B cell (primary cell): ENCODE measurements at regions of chr17 and their contacts with region 1.

Region 1: GRCh38 chr17:37358830-37359681 is 16.7 kb upstream of the C17orf78 start:
- DNase-seq: peak; percentile 95
- ATAC-seq: peak; percentile 95
- H3K4me3 ChIP-seq: peak overlapping the region; percentile 18 to 88 (median 83)
- H3K4me3 Mint-ChIP-seq: peak overlapping the region; percentile 92
- H3K27ac ChIP-seq: peak overlapping the region; percentile 60 to 63
- H3K27ac Mint-ChIP-seq: peak overlapping the region; percentile 80
- H3K4me1 ChIP-seq: peaks cover 12 to 18% of the 10 kb centered on the region in 2 donors
- H3K4me1 Mint-ChIP-seq: peaks cover 14% of the 10 kb centered on the region
- H3K27me3 ChIP-seq: no peaks in the 10 kb centered on the region
- H3K27me3 Mint-ChIP-seq: no peaks in the 10 kb centered on the region
- CTCF ChIP-seq: peak; percentile 47

Region 2: DNA sequence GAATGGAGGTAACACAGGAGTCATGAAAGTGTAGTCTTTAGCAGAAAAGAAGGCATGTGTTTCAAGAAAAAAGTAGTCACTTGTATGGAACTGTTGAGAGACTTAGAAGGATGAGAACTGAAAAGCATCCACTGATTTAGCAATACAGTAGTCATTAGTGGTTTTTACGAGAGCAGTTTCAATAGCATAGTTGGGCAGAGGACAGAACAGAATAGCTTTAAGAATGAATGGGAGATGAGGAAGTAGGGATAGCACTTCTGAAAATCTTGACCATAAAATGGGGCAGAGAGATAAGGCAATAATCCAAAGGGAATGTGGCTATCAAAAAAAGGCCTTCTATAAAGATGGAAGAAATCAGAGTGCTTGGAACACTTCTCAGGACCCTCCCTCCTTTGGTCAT is 48.1 kb before region 1 on chr17:
- CTCF ChIA-PET with region 1: no interaction called
- POLR2A ChIA-PET with region 1: no interaction called
- intact Hi-C with region 1: no loop called
- DNase-seq: no peak
- ATAC-seq: no peak
- H3K4me3 ChIP-seq: no peak overlapping the region
- H3K4me3 Mint-ChIP-seq: no peak overlapping the region
- H3K27ac ChIP-seq: no peak overlapping the region
- H3K27ac Mint-ChIP-seq: no peak overlapping the region
- H3K4me1 ChIP-seq: no peaks in the 10 kb centered on the region
- H3K4me1 Mint-ChIP-seq: no peaks in the 10 kb centered on the region
- H3K27me3 ChIP-seq: no peaks in the 10 kb centered on the region
- H3K27me3 Mint-ChIP-seq: no peaks in the 10 kb centered on the region
- CTCF ChIP-seq: no peak

Region 3: GRCh38 chr17:37373530-37374159 is 14.6 kb after region 1 on chr17:
- CTCF ChIA-PET with region 1: interaction called, 15 read pairs
- POLR2A ChIA-PET with region 1: no interaction called
- intact Hi-C with region 1: no loop called
- DNase-seq: peak; percentile 73
- ATAC-seq: peak; percentile 85
- H3K4me3 ChIP-seq: no peak overlapping the region
- H3K4me3 Mint-ChIP-seq: no peak overlapping the region
- H3K27ac ChIP-seq: no peak overlapping the region
- H3K27ac Mint-ChIP-seq: no peak overlapping the region
- H3K4me1 ChIP-seq: no peaks in the 10 kb centered on the region
- H3K4me1 Mint-ChIP-seq: peaks cover 3% of the 10 kb centered on the region
- H3K27me3 ChIP-seq: no peaks in the 10 kb centered on the region
- H3K27me3 Mint-ChIP-seq: no peaks in the 10 kb centered on the region
- CTCF ChIP-seq: peak; percentile 83

Region 4: DNA sequence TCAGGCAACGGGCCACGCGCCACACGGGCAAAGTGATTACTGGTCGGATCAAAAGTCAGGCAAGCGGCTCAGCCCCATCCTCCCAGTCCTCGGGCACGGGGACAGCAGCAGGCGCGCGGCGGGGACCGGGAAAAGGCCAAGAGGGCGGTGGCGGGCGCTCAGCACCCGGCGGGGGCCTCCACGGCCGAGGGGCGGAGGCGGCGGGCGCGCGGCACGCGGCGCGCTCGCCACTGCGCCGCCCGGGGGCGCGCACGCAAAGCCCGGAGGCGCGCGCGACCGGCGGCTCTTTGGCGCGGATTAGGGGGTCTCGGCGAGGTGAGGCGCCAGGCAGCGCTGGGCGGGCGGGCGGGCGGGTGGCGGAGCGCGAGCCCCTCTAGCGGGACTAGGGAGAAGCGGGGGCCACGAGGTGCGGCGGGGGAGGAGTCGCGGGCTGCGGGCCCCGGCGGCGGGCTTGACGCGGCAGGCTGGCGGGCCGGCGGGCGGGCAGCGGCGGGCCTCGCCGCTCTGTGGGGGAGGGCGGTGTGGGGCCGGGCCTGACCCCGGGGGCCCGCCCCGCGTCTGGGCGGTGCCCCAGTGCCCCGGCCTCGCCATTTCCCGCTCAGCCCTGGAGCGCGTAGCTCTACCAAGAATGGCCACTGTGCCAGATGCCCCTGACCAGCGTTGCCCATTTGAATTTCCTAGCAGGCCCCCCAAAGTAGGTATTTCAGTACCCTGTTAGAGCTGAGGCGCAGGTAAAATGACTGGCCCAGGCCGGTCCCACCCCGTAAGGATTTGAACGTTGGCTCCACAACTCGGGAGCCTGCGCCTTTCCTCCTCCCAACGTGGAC is 47.8 kb after region 1 on chr17 and contains the starts of genes ACACA and TADA2A:
- CTCF ChIA-PET with region 1: no interaction called
- POLR2A ChIA-PET with region 1: no interaction called
- intact Hi-C with region 1: loop called (anchors 1 kb)
- DNase-seq: peak; percentile 85
- ATAC-seq: peak; percentile 95
- H3K4me3 ChIP-seq: peak within 1 kb of the TSS; percentile 71 to 99 (median 91)
- H3K4me3 Mint-ChIP-seq: peak within 1 kb of the TSS; percentile 99
- H3K27ac ChIP-seq: peak within 1 kb of the TSS; percentile 69 to 72
- H3K27ac Mint-ChIP-seq: peak within 1 kb of the TSS; percentile 97
- H3K4me1 ChIP-seq: peaks cover 4 to 22% of the 10 kb centered on the region in 2 donors
- H3K4me1 Mint-ChIP-seq: peaks cover 36% of the 10 kb centered on the region
- H3K27me3 ChIP-seq: no peaks in the 10 kb centered on the region
- H3K27me3 Mint-ChIP-seq: no peaks in the 10 kb centered on the region
- CTCF ChIP-seq: no peak
- total RNA-seq, gene ACACA: 26.2 and 29.2 TPM in 2 replicates
- total RNA-seq, gene TADA2A: 43.3 and 44.3 TPM in 2 replicates

Region 5: GRCh38 chr17:37489197-37490001 is 130.3 kb after region 1 on chr17 and contains the start of gene DUSP14:
- CTCF ChIA-PET with region 1: no interaction called
- POLR2A ChIA-PET with region 1: no interaction called
- intact Hi-C with region 1: loop called (anchors 1 kb)
- DNase-seq: peak; percentile 89
- ATAC-seq: peak; percentile 80
- H3K4me3 ChIP-seq: peak within 1 kb of the TSS; percentile 61 to 80 (median 73)
- H3K4me3 Mint-ChIP-seq: peak within 1 kb of the TSS; percentile 96
- H3K27ac ChIP-seq: peak within 1 kb of the TSS in 1 of 2 donors; percentile 41
- H3K27ac Mint-ChIP-seq: peak within 1 kb of the TSS; percentile 93
- H3K4me1 ChIP-seq: peaks cover 17 to 23% of the 10 kb centered on the region in 2 donors
- H3K4me1 Mint-ChIP-seq: peaks cover 28% of the 10 kb centered on the region
- H3K27me3 ChIP-seq: peaks cover 0 to 4% (median 0%) of the 10 kb centered on the region in 4 experiments
- H3K27me3 Mint-ChIP-seq: no peaks in the 10 kb centered on the region
- CTCF ChIP-seq: no peak
- total RNA-seq, gene DUSP14: 4.9 and 5.1 TPM in 2 replicates